ENCODE measurements at regions of chr19 and their contacts with region 1.

Region 1: GRCh38 chr19:17859533-17860330 is at the start of gene RPL18A:
- DNase-seq: peak; percentile 83 to 100 (median 98)
- ATAC-seq: peak; percentile 97
- H3K4me3 ChIP-seq: peak within 1 kb of the TSS; percentile 96
- H3K4me3 Mint-ChIP-seq: peak within 1 kb of the TSS; percentile 95 to 100 (median 98)
- H3K27ac ChIP-seq: peak within 1 kb of the TSS; percentile 84
- H3K27ac Mint-ChIP-seq: peak within 1 kb of the TSS; percentile 93 to 99 (median 98)
- H3K4me1 ChIP-seq: peaks cover 18 to 19% of the 10 kb centered on the region in 2 donors
- H3K4me1 Mint-ChIP-seq: peaks cover 17 to 48% (median 33%) of the 10 kb centered on the region in 7 donors
- H3K27me3 ChIP-seq: no peaks in the 10 kb centered on the region
- H3K27me3 Mint-ChIP-seq: peaks cover 0 to 5% (median 0%) of the 10 kb centered on the region in 5 donors
- total RNA-seq, gene RPL18A: 2,413 to 3,932 (median 3,224) TPM

Region 2: GRCh38 chr19:17419621-17420466 is 439.9 kb before region 1 on chr19 and contains the start of gene MVB12A:
- CTCF ChIA-PET with region 1: no interaction called
- POLR2A ChIA-PET with region 1: interaction called, 4 read pairs
- intact Hi-C with region 1: loop called in 1 of 2 experiments (anchors 1 kb)
- DNase-seq: peak; percentile 85 to 98 (median 96)
- ATAC-seq: peak; percentile 99
- H3K4me3 ChIP-seq: peak within 1 kb of the TSS; percentile 79
- H3K4me3 Mint-ChIP-seq: peak within 1 kb of the TSS; percentile 87 to 95 (median 91)
- H3K27ac ChIP-seq: peak within 1 kb of the TSS; percentile 70
- H3K27ac Mint-ChIP-seq: peak within 1 kb of the TSS; percentile 73 to 93 (median 89)
- H3K4me1 ChIP-seq: peaks cover 12 to 15% of the 10 kb centered on the region in 2 donors
- H3K4me1 Mint-ChIP-seq: peaks cover 4 to 28% (median 19%) of the 10 kb centered on the region in 7 donors
- H3K27me3 ChIP-seq: no peaks in the 10 kb centered on the region
- H3K27me3 Mint-ChIP-seq: no peaks in the 10 kb centered on the region
- total RNA-seq, gene MVB12A: 19.5 to 45.1 (median 33.3) TPM

Region 3: DNA sequence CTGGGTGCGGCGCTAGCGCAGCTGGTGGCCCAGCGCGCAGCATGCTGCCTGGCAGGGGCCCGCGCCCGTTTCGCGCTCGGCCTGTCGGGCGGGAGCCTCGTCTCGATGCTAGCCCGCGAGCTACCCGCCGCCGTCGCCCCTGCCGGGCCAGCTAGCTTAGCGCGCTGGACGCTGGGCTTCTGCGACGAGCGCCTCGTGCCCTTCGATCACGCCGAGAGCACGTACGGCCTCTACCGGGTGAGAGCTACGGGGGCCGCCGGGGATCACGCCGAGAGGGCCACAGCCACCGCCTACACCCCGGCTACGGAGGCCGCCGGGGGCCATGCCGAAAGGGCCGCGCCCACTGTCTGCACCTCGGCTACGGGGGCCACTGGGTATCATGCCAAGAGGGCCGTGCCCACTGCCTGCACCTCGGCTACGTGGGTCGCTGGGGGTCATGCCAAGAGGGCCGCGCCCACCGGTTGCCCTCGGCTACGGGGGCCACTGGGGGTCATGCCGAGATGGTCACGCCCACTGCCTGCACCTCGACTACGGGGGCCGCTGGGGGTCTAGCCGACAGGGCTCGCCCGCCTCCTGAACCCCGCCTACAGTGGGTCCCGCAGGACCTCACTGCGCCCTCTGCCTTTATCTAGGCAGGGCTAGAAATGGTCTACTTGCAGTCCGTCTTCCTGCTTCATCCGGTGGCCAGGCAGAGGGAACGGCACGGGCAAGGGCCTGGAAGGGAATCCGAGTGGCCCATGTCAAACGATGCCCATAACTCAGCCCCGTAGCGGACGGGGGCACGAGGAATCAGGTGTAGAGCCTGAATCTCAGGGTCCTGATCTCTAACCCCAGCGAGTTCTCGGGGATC is 347.8 kb before region 1 on chr19:
- CTCF ChIA-PET with region 1: no interaction called
- POLR2A ChIA-PET with region 1: interaction called, 4 read pairs
- intact Hi-C with region 1: loop called in 1 of 2 experiments (anchors 1 kb)
- DNase-seq: peak; percentile 75 to 93 (median 90)
- ATAC-seq: peak; percentile 89
- H3K4me3 ChIP-seq: peak overlapping the region; percentile 75
- H3K4me3 Mint-ChIP-seq: peak overlapping the region; percentile 89 to 100 (median 99)
- H3K27ac ChIP-seq: peak overlapping the region; percentile 98
- H3K27ac Mint-ChIP-seq: peak overlapping the region; percentile 86 to 96 (median 92)
- H3K4me1 ChIP-seq: peaks cover 0 to 20% of the 10 kb centered on the region in 2 donors
- H3K4me1 Mint-ChIP-seq: peaks cover 26 to 46% (median 41%) of the 10 kb centered on the region in 7 donors
- H3K27me3 ChIP-seq: no peaks in the 10 kb centered on the region
- H3K27me3 Mint-ChIP-seq: no peaks in the 10 kb centered on the region

Region 4: DNA sequence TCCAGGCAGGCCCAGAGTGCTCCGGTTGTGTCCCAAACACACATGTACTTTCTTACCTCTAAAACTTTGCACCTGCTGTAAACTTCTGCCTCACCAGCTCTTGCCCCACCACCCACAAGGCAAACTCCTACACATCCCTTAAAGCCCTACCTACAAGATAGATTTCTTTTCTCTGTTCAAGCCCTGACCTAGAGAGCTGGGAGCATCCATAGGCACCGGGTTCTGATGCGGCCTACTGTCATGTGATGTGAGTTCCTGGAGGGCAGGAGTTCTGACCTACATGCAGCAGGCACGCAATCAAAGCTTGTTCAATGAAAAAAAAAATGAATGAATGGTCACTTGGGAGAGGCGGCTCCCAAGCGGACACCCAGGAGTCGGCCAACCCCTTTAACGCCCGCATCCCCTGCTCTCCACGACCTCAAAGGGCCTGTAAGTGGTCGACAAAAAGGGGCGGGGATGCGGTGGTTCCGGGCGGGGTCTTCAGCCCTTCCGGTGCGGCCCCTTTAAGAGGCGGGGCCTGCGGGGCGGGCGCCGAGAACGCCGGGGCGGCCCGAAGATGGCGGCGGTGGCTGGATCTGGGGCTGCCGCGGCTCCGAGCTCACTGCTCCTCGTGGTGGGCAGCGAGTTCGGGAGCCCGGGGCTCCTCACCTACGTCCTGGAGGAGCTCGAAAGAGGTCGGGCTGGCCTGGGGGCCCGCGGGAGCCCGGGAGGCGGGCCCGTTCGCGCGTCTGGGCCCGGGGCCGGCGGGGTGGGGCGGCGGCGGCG is 140.6 kb before region 1 on chr19 and contains the start of gene MAP1S:
- CTCF ChIA-PET with region 1: interaction called, 4 read pairs
- POLR2A ChIA-PET with region 1: interaction called, 5 read pairs
- intact Hi-C with region 1: loop called in 1 of 2 experiments (anchors 5 kb)
- DNase-seq: peak; percentile 26 to 82 (median 51)
- ATAC-seq: peak; percentile 85
- H3K4me3 ChIP-seq: peak within 1 kb of the TSS; percentile 71
- H3K4me3 Mint-ChIP-seq: peak within 1 kb of the TSS; percentile 85 to 93 (median 90)
- H3K27ac ChIP-seq: peak within 1 kb of the TSS; percentile 76
- H3K27ac Mint-ChIP-seq: peak within 1 kb of the TSS; percentile 75 to 96 (median 88)
- H3K4me1 ChIP-seq: peaks cover 19 to 24% of the 10 kb centered on the region in 2 donors
- H3K4me1 Mint-ChIP-seq: peaks cover 33 to 39% (median 36%) of the 10 kb centered on the region in 7 donors
- H3K27me3 ChIP-seq: no peaks in the 10 kb centered on the region
- H3K27me3 Mint-ChIP-seq: peaks cover 0 to 2% (median 0%) of the 10 kb centered on the region in 5 donors
- total RNA-seq, gene MAP1S: 28.6 to 73.8 (median 52.5) TPM

Region 5: DNA sequence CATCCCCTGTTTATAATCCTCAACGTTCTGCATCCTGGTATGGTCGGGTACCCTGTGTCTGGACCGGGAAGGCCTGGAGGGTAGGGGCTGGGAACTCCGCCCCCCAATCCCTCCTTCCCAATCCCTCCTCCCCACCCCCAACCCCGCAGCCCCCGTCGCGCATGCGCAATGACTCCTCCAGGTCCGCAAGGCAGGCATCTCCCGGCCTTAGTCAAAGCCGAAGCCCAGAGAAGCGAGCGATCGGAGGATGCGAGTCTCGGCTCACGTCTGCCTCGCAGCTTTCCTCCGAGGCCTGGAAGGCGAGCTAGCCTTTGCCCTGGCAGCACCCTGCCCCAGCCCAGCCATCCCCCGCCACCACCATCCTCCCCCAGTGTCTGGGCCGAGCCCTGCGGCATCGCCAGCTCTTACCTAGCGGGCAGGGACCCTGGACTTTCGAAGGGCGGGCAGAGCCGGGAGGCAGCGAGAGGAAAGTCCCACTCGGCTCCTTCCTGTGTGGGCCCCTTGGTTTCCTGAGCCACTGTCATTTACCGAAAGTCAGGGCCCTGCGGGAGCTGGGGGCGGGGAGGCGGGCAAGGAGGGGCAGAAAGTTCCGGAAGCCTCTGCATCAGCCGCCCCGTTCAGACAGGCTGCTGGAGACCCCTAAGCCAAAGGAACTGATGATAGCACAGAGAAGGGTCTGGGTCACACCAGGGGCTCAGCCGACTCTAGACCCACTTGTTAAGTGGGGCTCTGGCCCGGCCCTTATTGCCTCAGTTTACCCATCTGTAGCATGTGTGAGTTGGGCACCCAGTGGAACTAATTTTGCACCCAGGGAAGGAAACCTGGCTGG is 12.0 kb before region 1 on chr19 and contains the start of gene JAK3:
- CTCF ChIA-PET with region 1: interaction called, 23 read pairs
- POLR2A ChIA-PET with region 1: interaction called, 26 read pairs
- intact Hi-C with region 1: loop called (anchors 1 kb)
- DNase-seq: peak; percentile 66 to 91 (median 88)
- ATAC-seq: peak; percentile 89
- H3K4me3 ChIP-seq: peak within 1 kb of the TSS; percentile 86
- H3K4me3 Mint-ChIP-seq: peak within 1 kb of the TSS; percentile 87 to 97 (median 93)
- H3K27ac ChIP-seq: peak within 1 kb of the TSS; percentile 95
- H3K27ac Mint-ChIP-seq: peak within 1 kb of the TSS; percentile 92 to 100 (median 97)
- H3K4me1 ChIP-seq: peaks cover 55 to 70% of the 10 kb centered on the region in 2 donors
- H3K4me1 Mint-ChIP-seq: peaks cover 45 to 77% (median 65%) of the 10 kb centered on the region in 7 donors
- H3K27me3 ChIP-seq: no peaks in the 10 kb centered on the region
- H3K27me3 Mint-ChIP-seq: peaks cover 0 to 2% (median 0%) of the 10 kb centered on the region in 5 donors
- total RNA-seq, gene JAK3: 154 to 296 (median 202) TPM

Region 6: GRCh38 chr19:18058208-18059030 is 198.7 kb after region 1 on chr19:
- CTCF ChIA-PET with region 1: no interaction called
- POLR2A ChIA-PET with region 1: no interaction called
- intact Hi-C with region 1: loop called in 1 of 2 experiments (anchors 1 kb)
- DNase-seq: peak; percentile 76 to 88 (median 82)
- ATAC-seq: peak; percentile 97
- H3K4me3 ChIP-seq: peak overlapping the region; percentile 31
- H3K4me3 Mint-ChIP-seq: peak overlapping the region in 8 of 10 donors; percentile 32 to 62 (median 53)
- H3K27ac ChIP-seq: peak overlapping the region; percentile 62
- H3K27ac Mint-ChIP-seq: peak overlapping the region; percentile 71 to 89 (median 86)
- H3K4me1 ChIP-seq: peaks cover 8 to 13% of the 10 kb centered on the region in 2 donors
- H3K4me1 Mint-ChIP-seq: peaks cover 0 to 18% (median 16%) of the 10 kb centered on the region in 7 donors
- H3K27me3 ChIP-seq: no peaks in the 10 kb centered on the region
- H3K27me3 Mint-ChIP-seq: no peaks in the 10 kb centered on the region

Region 7: GRCh38 chr19:19410275-19411192 is 1550.8 kb after region 1 on chr19:
- CTCF ChIA-PET with region 1: no interaction called
- POLR2A ChIA-PET with region 1: no interaction called
- intact Hi-C with region 1: no loop called
- DNase-seq: no peak
- ATAC-seq: peak; percentile 33
- H3K4me3 ChIP-seq: no peak overlapping the region
- H3K4me3 Mint-ChIP-seq: peak overlapping the region in 9 of 10 donors; percentile 9 to 89 (median 38)
- H3K27ac ChIP-seq: peak overlapping the region; percentile 46
- H3K27ac Mint-ChIP-seq: peak overlapping the region; percentile 42 to 91 (median 65)
- H3K4me1 ChIP-seq: peaks cover 51 to 53% of the 10 kb centered on the region in 2 donors
- H3K4me1 Mint-ChIP-seq: peaks cover 55 to 78% (median 70%) of the 10 kb centered on the region in 7 donors
- H3K27me3 ChIP-seq: no peaks in the 10 kb centered on the region
- H3K27me3 Mint-ChIP-seq: no peaks in the 10 kb centered on the region

Measured in naive thymus-derived CD4-positive, alpha-beta T cell (primary cell).